Sigmoid colon (tissue), 7 donors: ENCODE measurements at regions of chr4 and their contacts with region 1.

Region 1: GRCh38 chr4:169024762-169025161 is 14.7 kb upstream of the CBR4 start:
- DNase-seq: no peak
- H3K4me3 ChIP-seq: no peak overlapping the region
- H3K27ac ChIP-seq: no peak overlapping the region
- H3K4me1 ChIP-seq: no peaks in the 10 kb centered on the region
- H3K27me3 ChIP-seq: no peaks in the 10 kb centered on the region
- CTCF ChIP-seq: peak; percentile 24 to 44 (median 34)
- EP300 ChIP-seq: no peak
- POLR2A ChIP-seq: no peak

Region 2: GRCh38 chr4:168942985-168943384 is 81.8 kb before region 1 on chr4:
- intact Hi-C with region 1: no loop called
- DNase-seq: no peak
- H3K4me3 ChIP-seq: no peak overlapping the region
- H3K27ac ChIP-seq: no peak overlapping the region
- H3K4me1 ChIP-seq: no peaks in the 10 kb centered on the region
- H3K27me3 ChIP-seq: no peaks in the 10 kb centered on the region
- CTCF ChIP-seq: peak in 2 of 4 experiments; percentile 32 to 56
- EP300 ChIP-seq: no peak
- POLR2A ChIP-seq: no peak

Region 3: GRCh38 chr4:169179609-169180521 is 155.1 kb after region 1 on chr4:
- intact Hi-C with region 1: no loop called
- DNase-seq: no peak
- H3K4me3 ChIP-seq: peak overlapping the region in 3 of 4 donors; percentile 6 to 23 (median 15)
- H3K27ac ChIP-seq: peak overlapping the region in 2 of 4 donors; percentile 35 to 56
- H3K4me1 ChIP-seq: peaks cover 0 to 33% (median 6%) of the 10 kb centered on the region in 4 donors
- H3K27me3 ChIP-seq: no peaks in the 10 kb centered on the region
- CTCF ChIP-seq: no peak
- EP300 ChIP-seq: no peak
- POLR2A ChIP-seq: no peak

Region 4: GRCh38 chr4:169510617-169511016 is 485.9 kb after region 1 on chr4:
- intact Hi-C with region 1: no loop called
- DNase-seq: no peak
- H3K4me3 ChIP-seq: no peak overlapping the region
- H3K27ac ChIP-seq: no peak overlapping the region
- H3K4me1 ChIP-seq: no peaks in the 10 kb centered on the region
- H3K27me3 ChIP-seq: no peaks in the 10 kb centered on the region
- CTCF ChIP-seq: no peak
- EP300 ChIP-seq: no peak
- POLR2A ChIP-seq: no peak

Region 5: GRCh38 chr4:169566021-169566818 is 541.5 kb after region 1 on chr4:
- intact Hi-C with region 1: loop called (anchors 10 kb)
- DNase-seq: no peak
- H3K4me3 ChIP-seq: no peak overlapping the region
- H3K27ac ChIP-seq: no peak overlapping the region
- H3K4me1 ChIP-seq: peaks cover 0 to 9% (median 0%) of the 10 kb centered on the region in 4 donors
- H3K27me3 ChIP-seq: no peaks in the 10 kb centered on the region
- CTCF ChIP-seq: peak in 3 of 4 experiments; percentile 17 to 70 (median 45)
- EP300 ChIP-seq: no peak
- POLR2A ChIP-seq: no peak

Region 6: DNA sequence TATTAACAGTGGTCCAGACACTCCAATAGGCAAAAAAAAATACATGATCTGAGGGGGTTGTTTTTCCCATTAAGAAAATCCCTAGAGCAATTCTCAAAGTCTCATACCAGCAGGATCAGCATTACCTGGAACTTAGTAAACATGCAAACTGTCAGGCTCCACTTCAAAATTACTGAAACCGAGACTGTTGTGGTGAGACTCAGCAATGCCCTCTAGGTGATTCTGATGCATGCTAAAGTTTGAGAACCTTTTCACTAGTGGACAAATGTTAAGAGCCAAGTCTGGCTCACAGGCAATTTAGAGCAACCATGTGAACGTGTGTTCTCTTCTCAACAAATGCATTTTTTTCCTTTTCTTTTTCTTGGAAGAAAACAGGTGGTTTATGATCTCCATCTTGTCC is 557.4 kb after region 1 on chr4:
- intact Hi-C with region 1: no loop called
- DNase-seq: no peak
- H3K4me3 ChIP-seq: no peak overlapping the region
- H3K27ac ChIP-seq: no peak overlapping the region
- H3K4me1 ChIP-seq: peaks cover 0 to 8% (median 5%) of the 10 kb centered on the region in 4 donors
- H3K27me3 ChIP-seq: no peaks in the 10 kb centered on the region
- CTCF ChIP-seq: no peak
- EP300 ChIP-seq: no peak
- POLR2A ChIP-seq: no peak